ENCODE measurements at regions of chr17 and their contacts with region 1.

Region 1: DNA sequence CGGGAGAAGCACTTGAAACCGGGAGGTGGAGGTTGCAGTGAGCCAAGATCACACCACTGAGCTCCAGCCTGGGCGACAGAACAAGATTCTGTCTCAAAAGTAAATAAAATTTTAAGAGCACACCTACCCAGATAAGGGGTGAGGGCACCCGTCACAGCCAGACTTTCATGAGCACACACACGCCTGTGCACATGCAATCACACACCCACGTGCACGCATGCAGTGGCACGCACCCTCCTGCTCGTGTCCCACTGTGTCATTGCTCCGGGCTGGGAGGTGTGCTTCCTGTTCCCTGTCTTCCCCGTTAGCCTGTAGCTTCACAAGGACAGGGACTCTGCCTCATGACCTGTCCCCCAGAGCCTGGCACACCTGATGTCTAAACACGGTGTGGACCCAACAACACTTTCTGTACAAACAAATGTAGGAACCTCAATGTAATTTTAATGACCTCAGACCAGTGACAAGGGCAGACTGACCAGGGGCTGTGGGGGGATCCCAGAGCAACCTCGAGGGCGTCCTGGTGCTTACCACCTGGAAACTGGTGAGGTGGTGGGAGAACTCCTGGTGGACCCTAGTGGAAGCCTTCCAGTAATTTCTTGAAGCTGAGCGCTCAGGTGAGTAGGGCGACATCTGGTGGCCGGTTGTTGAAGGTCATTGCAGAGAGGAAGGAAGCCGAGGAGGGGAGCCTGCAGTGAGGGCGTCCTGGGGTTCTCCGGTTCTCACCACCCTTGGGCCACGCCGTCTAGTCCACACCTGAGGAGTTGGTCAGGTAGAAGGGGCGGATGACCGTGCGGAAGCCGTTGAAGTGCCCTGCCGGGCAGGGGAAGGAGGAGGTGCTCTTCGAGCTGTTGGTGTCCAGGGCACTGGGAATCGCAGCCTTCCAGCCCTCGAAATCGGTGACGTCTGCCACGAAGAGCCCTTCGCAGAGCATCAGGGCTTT is 8.6 kb downstream of the LGALS3BP start:
- DNase-seq: peak; percentile 74
- H3K4me3 ChIP-seq: no peak overlapping the region
- H3K27ac ChIP-seq: no peak overlapping the region
- H3K4me1 ChIP-seq: no peaks in the 10 kb centered on the region
- H3K27me3 ChIP-seq: no peaks in the 10 kb centered on the region
- CTCF ChIP-seq: peak; percentile 76 to 83
- POLR2A ChIP-seq: no peak

Region 2: GRCh38 chr17:78661093-78661770 is 309.9 kb before region 1 on chr17:
- CTCF ChIA-PET with region 1: no interaction called
- POLR2A ChIA-PET with region 1: no interaction called
- dilution Hi-C with region 1: no loop called
- intact Hi-C with region 1: no loop called
- DNase-seq: no peak
- H3K4me3 ChIP-seq: no peak overlapping the region
- H3K27ac ChIP-seq: no peak overlapping the region
- H3K4me1 ChIP-seq: peaks cover 17% of the 10 kb centered on the region
- H3K27me3 ChIP-seq: peaks cover 0 to 11% of the 10 kb centered on the region in 2 experiments
- CTCF ChIP-seq: no peak
- POLR2A ChIP-seq: no peak

Region 3: DNA sequence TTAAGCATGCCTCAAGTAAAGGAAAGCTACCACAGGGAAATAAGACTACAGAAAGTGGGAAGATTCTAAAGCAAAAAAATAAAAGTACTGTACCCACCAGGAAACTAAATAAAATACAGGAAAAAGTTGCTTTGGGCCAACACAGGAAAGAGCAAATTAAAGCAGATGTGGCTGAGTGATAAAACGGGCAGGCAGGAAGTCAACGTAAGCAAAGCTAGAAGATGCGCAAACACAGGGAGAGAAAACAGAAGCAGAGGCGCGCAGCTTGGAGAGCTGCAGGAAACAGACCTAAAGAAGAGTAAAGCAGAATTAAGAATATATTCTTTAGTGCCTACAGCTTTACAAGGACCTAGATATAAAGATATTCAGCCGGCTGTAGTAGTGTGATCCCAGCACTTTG is 152.2 kb before region 1 on chr17:
- CTCF ChIA-PET with region 1: interaction called, 11 read pairs
- POLR2A ChIA-PET with region 1: no interaction called
- dilution Hi-C with region 1: no loop called
- intact Hi-C with region 1: no loop called
- DNase-seq: peak; percentile 92
- H3K4me3 ChIP-seq: no peak overlapping the region
- H3K27ac ChIP-seq: peak overlapping the region; percentile 56
- H3K4me1 ChIP-seq: peaks cover 19% of the 10 kb centered on the region
- H3K27me3 ChIP-seq: no peaks in the 10 kb centered on the region
- CTCF ChIP-seq: no peak
- POLR2A ChIP-seq: peak; percentile 56

Region 4: DNA sequence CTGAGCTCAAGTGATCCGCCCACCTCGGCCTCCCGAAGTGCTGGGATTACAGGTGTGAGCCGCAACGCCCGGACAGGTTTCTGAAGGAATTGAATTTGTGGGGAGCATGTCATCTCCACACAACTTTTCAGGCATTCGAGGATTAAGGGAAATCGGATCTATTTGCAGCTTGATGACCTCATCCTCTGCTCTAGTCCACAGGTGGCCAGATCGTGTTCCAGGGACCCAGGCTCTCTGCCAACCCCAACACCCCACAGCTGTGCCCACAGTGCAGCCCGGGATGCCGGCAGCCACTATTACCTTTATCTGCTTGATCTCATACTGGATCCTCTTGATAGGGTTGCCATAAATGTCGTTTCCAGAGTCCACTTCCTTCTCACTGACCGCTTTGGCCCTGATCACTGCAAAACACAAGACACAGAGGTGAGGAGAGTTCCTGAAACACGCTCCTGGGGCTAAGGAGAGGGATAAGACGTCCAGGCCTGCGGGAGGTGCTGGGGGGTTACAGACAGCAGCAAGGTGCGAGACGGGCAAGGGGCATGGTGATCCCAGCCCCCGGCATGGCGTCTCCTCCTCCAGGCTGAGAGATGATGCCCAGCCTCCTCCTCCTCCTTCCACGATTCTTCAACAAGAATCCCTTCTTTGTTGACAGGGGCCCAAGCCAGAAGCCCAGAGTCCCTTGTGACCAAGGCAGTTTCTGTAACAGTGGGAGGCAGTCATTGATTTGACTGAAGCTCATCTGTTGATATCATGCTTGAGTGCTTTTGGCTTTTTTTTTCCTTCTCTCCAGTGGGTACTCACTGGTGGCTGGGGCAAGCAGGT is 97.4 kb before region 1 on chr17:
- CTCF ChIA-PET with region 1: interaction called, 171 read pairs
- POLR2A ChIA-PET with region 1: no interaction called
- dilution Hi-C with region 1: no loop called
- intact Hi-C with region 1: no loop called
- DNase-seq: peak; percentile 94
- H3K4me3 ChIP-seq: no peak overlapping the region
- H3K27ac ChIP-seq: peak overlapping the region; percentile 27
- H3K4me1 ChIP-seq: peaks cover 30% of the 10 kb centered on the region
- H3K27me3 ChIP-seq: no peaks in the 10 kb centered on the region
- CTCF ChIP-seq: no peak
- POLR2A ChIP-seq: peak; percentile 29

Region 5: GRCh38 chr17:78903101-78903779 is 67.9 kb before region 1 on chr17 and contains the start of gene CEP295NL:
- CTCF ChIA-PET with region 1: interaction called, 12 read pairs
- POLR2A ChIA-PET with region 1: no interaction called
- dilution Hi-C with region 1: no loop called
- intact Hi-C with region 1: no loop called
- DNase-seq: no peak
- H3K4me3 ChIP-seq: no peak within 1 kb of the TSS
- H3K27ac ChIP-seq: no peak within 1 kb of the TSS
- H3K4me1 ChIP-seq: no peaks in the 10 kb centered on the region
- H3K27me3 ChIP-seq: no peaks in the 10 kb centered on the region
- CTCF ChIP-seq: no peak
- POLR2A ChIP-seq: no peak
- total RNA-seq, gene CEP295NL: 3.6 and 8.3 TPM in 2 replicates

Region 6: DNA sequence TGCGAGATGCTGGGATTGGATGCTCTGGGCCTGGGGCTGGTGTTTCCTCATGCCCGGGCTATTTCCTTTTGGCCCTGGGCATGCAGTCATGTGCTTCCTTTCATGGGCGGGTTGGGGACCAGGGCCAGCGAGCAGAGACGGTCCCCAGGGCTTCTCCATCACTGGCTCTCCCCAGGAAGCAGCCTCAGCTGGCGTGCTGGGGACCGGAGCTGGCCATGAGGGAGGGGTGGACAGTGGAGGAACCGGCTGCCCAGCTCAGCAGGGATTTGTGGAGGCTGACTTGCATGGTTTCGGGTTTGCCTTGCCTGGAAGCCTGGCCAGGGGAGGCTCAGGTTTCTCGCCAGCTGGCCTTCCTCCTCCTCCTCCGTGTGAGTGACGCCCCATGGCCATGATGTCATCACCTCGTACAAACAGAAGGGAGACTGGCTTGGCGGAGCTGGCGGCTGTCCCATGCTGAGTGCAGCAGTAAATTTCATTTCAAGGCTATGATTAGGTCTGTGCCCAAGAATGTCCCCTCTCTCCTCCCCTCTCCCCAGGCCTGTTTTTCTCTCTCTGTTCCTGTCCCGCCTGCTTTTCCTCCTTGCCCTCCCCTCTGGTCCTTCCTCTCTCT is 37.0 kb before region 1 on chr17:
- CTCF ChIA-PET with region 1: interaction called, 29 read pairs
- POLR2A ChIA-PET with region 1: no interaction called
- dilution Hi-C with region 1: no loop called
- intact Hi-C with region 1: loop called (anchors 1 kb)
- DNase-seq: peak; percentile 96
- H3K4me3 ChIP-seq: peak overlapping the region in 2 of 3 experiments; percentile 16 to 25
- H3K27ac ChIP-seq: peak overlapping the region; percentile 93
- H3K4me1 ChIP-seq: peaks cover 30% of the 10 kb centered on the region
- H3K27me3 ChIP-seq: no peaks in the 10 kb centered on the region
- CTCF ChIP-seq: no peak
- POLR2A ChIP-seq: peak; percentile 55

Region 7: DNA sequence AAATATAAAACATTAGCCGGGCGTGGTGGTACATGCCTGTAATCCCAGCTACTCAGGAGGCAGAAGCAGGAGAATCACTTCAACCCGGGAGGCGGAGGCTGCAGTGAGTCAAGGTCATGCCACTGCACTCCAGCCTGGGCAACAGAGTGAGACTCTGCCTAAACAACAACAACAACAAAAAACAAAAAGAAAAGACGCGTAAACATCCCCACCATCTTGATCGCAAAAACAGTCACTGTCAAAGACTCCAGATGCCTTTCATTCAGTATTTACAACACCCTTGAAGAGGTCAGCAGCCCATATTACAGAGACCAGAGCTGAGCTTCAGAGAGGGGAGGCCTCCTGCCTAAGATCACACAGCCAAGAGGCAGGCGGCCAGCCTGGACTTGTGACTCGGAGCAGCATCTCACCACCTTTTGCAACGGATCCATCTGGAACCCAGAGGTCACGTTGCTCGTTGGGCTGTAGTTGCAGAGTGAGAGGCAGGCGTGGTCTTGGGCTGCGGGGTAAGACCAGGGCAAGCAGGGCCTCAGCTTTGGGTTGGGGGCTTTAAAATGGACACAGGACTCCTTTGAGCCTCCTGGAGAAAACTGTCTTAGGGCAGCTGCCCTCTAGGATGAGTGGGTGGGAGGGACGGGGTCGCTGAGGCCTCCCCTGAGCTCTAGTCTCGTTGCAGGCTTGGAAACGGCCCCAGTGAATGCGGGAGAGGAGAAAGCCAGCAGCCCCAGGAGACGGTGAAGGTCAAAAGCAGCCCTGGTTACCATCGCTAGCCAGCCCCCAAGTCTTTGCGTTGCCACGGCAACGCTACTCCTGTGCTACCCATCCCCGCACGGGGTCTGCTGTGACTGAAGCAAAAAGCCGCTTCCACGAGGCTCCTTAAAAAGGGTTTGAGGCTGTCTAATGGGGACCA is 17.5 kb before region 1 on chr17:
- CTCF ChIA-PET with region 1: interaction called, 12 read pairs
- POLR2A ChIA-PET with region 1: no interaction called
- dilution Hi-C with region 1: no loop called
- intact Hi-C with region 1: no loop called
- DNase-seq: no peak
- H3K4me3 ChIP-seq: no peak overlapping the region
- H3K27ac ChIP-seq: no peak overlapping the region
- H3K4me1 ChIP-seq: no peaks in the 10 kb centered on the region
- H3K27me3 ChIP-seq: no peaks in the 10 kb centered on the region
- CTCF ChIP-seq: no peak
- POLR2A ChIP-seq: no peak

Measured in endothelial cell of umbilical vein (primary cell).